GM10248 (cell line): ENCODE measurements at regions of chr7 and their contacts with region 1.

Region 1: GRCh38 chr7:90211391-90212148 is at the start of gene STEAP2:
- DNase-seq: peak; percentile 70
- CTCF ChIP-seq: peak; percentile 67

Region 2: GRCh38 chr7:89503281-89503680 is 708.3 kb before region 1 on chr7:
- CTCF ChIA-PET with region 1: no interaction called
- POLR2A ChIA-PET with region 1: no interaction called
- DNase-seq: no peak
- CTCF ChIP-seq: no peak

Region 3: DNA sequence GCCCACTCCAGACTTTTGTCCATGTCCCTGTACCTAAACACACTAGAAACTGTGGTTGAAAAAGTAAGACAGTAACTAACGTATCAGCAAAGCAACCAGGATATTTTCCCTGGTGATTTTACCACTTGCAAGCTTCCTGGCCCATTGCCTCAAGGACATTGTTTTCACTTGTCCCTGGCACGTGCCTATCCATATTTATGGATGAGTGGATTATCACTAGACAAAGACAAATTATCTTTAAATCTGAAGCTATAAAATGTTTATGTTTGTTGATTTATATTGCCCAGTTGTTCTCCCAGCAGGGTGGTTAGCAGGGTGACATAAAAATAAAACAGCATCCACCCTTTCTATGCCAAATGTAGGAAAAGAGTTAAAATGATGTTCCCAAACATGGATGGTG is 150.5 kb before region 1 on chr7:
- CTCF ChIA-PET with region 1: no interaction called
- POLR2A ChIA-PET with region 1: no interaction called
- DNase-seq: no peak
- CTCF ChIP-seq: no peak

Region 4: DNA sequence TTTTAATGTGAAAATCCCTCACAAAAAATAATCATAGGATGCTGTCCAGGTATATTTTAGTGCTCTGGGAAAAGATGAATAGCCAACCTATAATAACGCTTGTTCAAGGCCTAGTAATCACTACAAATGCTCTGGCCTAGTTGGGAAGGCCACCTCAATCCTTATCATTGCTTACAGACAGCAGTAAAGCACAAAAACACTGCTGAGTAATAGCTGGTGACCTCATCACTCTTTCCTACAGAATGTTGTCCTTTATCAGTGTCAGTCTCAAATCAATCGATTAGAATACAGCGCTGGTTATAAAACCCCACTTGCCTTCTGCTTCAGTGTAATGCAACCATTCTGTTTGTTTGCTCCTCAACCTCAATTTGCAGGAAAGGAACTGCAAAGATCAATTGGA is 129.9 kb before region 1 on chr7:
- CTCF ChIA-PET with region 1: no interaction called
- POLR2A ChIA-PET with region 1: no interaction called
- DNase-seq: no peak
- CTCF ChIP-seq: no peak

Region 5: DNA sequence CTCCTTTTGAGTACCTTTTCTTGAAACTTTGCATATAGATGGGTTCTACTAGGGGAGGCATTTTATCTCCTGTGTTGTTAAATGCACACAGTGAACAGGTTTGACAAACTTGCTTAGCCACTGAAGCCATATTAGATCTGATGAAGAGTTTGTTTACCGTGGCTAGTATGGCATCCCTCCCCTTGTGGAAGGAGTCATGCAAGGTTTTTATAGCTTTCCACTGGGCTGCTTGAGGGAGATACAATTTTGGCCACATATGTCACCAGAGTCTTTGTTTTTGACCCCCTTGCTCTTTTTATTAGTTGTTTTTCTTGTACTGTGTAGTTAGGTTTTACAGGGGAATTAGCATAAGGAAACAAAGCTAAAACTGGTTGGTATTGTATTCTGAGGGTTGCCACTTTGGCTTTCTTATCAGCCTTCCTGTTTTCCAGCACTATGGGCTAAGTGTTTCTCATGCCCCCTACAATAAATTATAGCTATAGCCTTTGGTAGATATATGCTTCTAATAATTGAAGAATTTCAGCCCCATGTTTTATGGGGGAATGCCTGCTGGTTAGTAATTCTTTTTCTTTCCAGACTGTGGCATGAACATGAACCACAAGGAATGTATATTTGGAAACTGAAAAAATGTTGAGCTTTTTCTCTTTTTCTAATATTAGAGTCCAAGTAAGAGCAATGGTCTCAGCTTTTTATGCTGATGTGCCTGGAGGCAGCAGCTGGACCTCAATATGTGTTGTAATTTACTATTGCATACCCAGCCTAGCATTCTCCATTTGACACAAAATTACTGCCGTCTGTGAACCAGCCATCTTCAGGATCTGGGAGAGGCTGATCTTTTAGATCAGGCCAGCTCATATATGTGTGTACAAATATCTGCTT is 18.5 kb before region 1 on chr7:
- CTCF ChIA-PET with region 1: interaction called, 14 read pairs
- POLR2A ChIA-PET with region 1: no interaction called
- DNase-seq: no peak
- CTCF ChIP-seq: no peak

Region 6: GRCh38 chr7:90222811-90223725 is 11.5 kb after region 1 on chr7:
- CTCF ChIA-PET with region 1: interaction called, 16 read pairs
- POLR2A ChIA-PET with region 1: no interaction called
- DNase-seq: no peak
- CTCF ChIP-seq: no peak

Region 7: DNA sequence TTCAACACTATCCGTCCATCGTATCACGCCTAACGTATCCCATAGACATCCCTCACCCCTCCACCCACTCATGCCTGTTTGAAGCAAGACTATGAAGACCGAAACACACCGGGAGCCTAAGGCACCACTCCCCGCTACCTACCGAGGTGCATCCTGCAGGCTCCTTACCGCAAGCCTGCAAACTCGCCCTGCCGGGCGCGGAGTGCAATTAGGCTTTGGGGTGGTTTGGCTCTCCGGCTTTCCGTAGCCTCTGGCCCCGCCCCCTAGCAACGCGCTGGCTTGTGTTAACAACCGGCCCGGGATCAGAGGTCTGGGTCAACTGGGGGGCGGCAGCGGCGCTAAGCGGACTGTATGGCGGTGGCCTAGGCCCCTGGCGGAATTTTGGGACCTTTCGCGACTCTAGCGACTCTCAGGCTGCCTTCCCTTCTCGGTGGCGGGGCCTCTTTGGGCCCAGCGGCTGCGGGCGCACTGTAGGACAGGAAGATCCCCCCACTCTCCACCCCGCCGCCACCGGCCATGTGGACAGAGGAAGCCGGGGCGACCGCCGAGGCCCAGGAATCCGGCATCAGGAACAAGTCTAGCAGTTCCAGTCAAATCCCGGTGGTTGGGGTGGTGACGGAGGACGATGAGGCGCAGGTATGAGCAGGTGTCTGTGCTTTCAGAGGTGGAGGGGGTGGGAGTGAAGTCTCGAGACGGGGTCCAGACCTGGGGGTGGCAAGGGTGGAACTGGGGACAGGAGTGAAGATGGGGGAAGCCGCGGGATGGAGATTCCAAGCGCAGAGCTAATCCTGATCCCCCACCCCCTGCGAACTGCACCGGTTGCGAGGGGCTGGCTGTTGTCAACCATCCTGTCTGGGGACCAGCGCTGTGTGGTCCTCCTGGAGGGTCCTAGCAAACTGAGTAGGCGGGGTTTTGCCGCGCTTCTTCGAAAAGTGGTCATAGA is 33.6 kb after region 1 on chr7 and contains the start of gene CFAP69:
- CTCF ChIA-PET with region 1: interaction called, 10 read pairs
- POLR2A ChIA-PET with region 1: no interaction called
- DNase-seq: peak; percentile 89
- CTCF ChIP-seq: no peak

Region 8: GRCh38 chr7:90492250-90492649 is 280.7 kb after region 1 on chr7:
- CTCF ChIA-PET with region 1: no interaction called
- POLR2A ChIA-PET with region 1: no interaction called
- DNase-seq: no peak
- CTCF ChIP-seq: no peak